Calu3 (cell line): ENCODE measurements at regions of chr3 and their contacts with region 1.

Region 1: GRCh38 chr3:138915503-138916498 is 31.1 kb downstream of the FOXL2 start:
- DNase-seq: peak; percentile 99
- H3K4me3 Mint-ChIP-seq: peak overlapping the region; percentile 71
- H3K27ac Mint-ChIP-seq: peak overlapping the region; percentile 53
- H3K4me1 Mint-ChIP-seq: peaks cover 19% of the 10 kb centered on the region
- H3K27me3 Mint-ChIP-seq: no peaks in the 10 kb centered on the region
- CTCF ChIP-seq: peak; percentile 94

Region 2: DNA sequence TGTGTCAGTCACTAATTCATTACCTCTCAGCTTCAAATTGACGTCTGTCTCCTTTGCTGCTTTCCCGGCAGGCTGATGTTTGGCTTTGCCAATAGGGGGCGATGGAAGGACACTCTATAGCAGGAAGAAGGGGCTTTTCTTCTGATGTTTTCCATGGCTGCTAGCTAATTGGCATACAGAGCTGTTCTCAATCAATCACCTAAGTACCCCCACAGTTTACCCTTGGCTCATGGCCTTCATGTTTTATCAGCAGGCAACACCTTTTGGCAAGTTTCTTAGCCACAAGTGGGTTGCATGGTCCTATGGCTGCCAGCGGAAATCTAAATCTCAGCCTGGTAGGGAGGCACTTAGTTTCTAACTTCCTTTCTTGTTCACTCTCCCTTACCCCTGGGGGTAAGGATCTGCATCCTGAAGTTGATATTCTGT is 436.4 kb before region 1 on chr3:
- CTCF ChIA-PET with region 1: interaction called, 29 read pairs
- intact Hi-C with region 1: no loop called
- DNase-seq: peak; percentile 79
- H3K4me3 Mint-ChIP-seq: no peak overlapping the region
- H3K27ac Mint-ChIP-seq: no peak overlapping the region
- H3K4me1 Mint-ChIP-seq: no peaks in the 10 kb centered on the region
- H3K27me3 Mint-ChIP-seq: no peaks in the 10 kb centered on the region
- CTCF ChIP-seq: peak; percentile 92

Region 3: DNA sequence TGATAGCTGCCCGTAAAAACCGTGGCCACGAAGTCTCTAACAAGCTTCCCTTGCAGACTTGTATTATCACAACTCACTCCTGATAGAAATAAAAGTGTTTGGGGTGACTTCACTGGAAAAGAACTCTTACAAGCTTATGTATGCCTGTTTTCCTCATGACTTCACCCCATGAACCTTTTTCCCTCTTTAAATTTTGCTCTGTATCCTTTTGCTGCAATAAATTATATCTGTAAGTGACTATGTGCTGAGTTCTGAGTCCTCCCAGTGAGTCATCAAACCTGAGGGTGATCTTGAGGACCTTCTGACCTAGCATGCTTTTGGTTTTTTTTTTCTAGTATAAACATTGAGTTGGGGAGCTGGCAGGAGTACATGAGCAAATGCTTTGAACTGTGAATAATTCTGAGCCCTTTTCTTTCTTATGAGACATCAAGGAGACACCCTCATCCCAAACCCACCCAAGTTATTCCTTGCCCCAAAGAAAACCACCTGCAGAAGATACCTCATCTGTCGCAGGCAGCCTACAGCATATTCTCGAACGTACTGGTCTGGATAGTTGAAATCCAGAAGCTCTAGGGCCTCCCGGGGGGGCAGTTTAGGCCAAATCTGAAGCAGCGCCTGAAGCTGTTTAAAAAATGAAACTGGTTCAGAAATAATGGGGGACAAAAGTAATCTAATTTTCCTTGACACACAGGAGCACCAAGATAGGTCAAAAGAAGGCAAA is 221.4 kb before region 1 on chr3:
- CTCF ChIA-PET with region 1: interaction called, 47 read pairs
- intact Hi-C with region 1: loop called (anchors 1 kb)
- DNase-seq: no peak
- H3K4me3 Mint-ChIP-seq: no peak overlapping the region
- H3K27ac Mint-ChIP-seq: no peak overlapping the region
- H3K4me1 Mint-ChIP-seq: peaks cover 13% of the 10 kb centered on the region
- H3K27me3 Mint-ChIP-seq: no peaks in the 10 kb centered on the region
- CTCF ChIP-seq: no peak

Region 4: DNA sequence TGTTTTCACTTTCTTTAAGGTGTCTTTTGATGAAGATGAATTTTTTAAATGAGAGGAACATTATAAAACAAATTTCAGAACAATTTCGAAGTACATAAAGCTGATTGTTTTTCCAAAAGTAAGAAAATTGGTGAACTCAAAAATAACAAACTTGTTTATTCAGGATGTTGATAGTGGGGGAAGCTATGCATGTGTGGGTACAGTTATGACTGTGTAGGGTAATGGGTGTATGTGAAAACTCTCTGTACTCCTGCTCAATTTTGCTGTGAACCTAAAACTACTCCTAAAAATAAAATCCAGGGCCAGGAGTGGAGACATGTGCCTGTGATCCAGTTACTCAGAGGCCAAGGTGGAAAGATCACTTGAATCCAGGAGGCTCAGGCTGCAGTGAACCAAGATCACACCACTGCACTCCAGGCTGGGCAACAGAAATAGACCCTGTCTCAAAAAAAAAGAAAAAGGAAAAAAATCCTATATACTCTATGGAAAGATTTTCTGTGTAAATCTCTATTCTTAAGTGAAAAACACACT is 118.2 kb before region 1 on chr3:
- CTCF ChIA-PET with region 1: interaction called, 11 read pairs
- intact Hi-C with region 1: no loop called
- DNase-seq: no peak
- H3K4me3 Mint-ChIP-seq: no peak overlapping the region
- H3K27ac Mint-ChIP-seq: no peak overlapping the region
- H3K4me1 Mint-ChIP-seq: peaks cover under 1% of the 10 kb centered on the region
- H3K27me3 Mint-ChIP-seq: no peaks in the 10 kb centered on the region
- CTCF ChIP-seq: no peak

Region 5: DNA sequence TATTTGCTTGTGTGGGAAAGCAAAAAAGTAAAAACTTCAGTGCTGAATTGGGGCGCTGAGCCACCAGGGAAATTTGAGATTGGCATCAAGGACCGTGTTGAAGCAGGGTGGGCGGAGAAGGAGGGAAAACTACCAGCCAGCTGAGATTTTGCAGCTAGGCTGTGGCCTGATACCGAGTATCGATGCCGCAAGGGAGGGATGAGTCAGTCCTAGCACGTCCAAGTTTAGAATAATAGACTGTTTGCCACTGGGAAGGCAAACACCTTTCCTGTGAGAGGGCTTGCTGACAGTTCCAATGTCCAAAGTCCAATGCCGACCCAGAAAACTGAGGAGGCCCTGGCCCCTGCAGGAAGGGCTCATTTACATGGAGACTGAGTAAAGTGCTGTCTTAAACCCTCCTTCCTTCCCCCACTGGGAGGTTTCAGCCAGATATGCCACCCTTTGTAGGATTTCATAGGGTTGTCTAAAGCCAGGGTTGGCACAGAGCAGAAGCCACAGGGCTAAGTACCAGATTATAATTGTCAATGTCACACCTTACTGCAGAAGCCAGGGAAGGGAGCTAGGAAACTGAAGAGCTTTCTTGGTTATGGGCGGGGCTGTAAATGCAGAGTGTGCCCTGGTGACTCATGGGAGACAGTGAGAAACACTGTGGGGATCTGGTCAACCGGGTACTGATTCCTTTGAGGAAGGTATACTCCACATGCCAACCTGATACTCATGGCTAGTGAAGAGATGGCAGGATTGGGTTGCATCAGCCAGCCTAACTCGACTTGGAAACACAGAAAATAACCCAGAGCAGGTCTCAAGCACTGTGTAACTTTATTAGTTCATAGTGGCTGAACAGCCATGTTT is 52.7 kb before region 1 on chr3:
- CTCF ChIA-PET with region 1: interaction called, 24 read pairs
- intact Hi-C with region 1: loop called (anchors 1 kb)
- DNase-seq: peak; percentile 87
- H3K4me3 Mint-ChIP-seq: peak overlapping the region; percentile 52
- H3K27ac Mint-ChIP-seq: peak overlapping the region; percentile 94
- H3K4me1 Mint-ChIP-seq: peaks cover 34% of the 10 kb centered on the region
- H3K27me3 Mint-ChIP-seq: no peaks in the 10 kb centered on the region
- CTCF ChIP-seq: no peak